Activated CD4-positive, alpha-beta T cell treated with anti-CD3 and anti-CD28 coated beads for 36 hours (primary cell): ENCODE measurements at regions of chr11 and their contacts with region 1.

Region 1: GRCh38 chr11:61639816-61640443 is 40.3 kb upstream of the DAGLA start:
- DNase-seq: peak; percentile 15
- ATAC-seq: no peak
- H3K4me3 Mint-ChIP-seq: no peak overlapping the region
- H3K27ac Mint-ChIP-seq: no peak overlapping the region
- H3K4me1 Mint-ChIP-seq: no peaks in the 10 kb centered on the region
- H3K27me3 Mint-ChIP-seq: no peaks in the 10 kb centered on the region

Region 2: GRCh38 chr11:61477727-61478148 is 162.2 kb before region 1 on chr11:
- CTCF ChIA-PET with region 1: interaction called, 22 read pairs
- POLR2A ChIA-PET with region 1: no interaction called
- intact Hi-C with region 1: loop called (anchors 1 to 5 kb)
- DNase-seq: peak; percentile 70
- ATAC-seq: peak; percentile 56
- H3K4me3 Mint-ChIP-seq: no peak overlapping the region
- H3K27ac Mint-ChIP-seq: no peak overlapping the region
- H3K4me1 Mint-ChIP-seq: peaks cover 9% of the 10 kb centered on the region
- H3K27me3 Mint-ChIP-seq: no peaks in the 10 kb centered on the region

Region 3: DNA sequence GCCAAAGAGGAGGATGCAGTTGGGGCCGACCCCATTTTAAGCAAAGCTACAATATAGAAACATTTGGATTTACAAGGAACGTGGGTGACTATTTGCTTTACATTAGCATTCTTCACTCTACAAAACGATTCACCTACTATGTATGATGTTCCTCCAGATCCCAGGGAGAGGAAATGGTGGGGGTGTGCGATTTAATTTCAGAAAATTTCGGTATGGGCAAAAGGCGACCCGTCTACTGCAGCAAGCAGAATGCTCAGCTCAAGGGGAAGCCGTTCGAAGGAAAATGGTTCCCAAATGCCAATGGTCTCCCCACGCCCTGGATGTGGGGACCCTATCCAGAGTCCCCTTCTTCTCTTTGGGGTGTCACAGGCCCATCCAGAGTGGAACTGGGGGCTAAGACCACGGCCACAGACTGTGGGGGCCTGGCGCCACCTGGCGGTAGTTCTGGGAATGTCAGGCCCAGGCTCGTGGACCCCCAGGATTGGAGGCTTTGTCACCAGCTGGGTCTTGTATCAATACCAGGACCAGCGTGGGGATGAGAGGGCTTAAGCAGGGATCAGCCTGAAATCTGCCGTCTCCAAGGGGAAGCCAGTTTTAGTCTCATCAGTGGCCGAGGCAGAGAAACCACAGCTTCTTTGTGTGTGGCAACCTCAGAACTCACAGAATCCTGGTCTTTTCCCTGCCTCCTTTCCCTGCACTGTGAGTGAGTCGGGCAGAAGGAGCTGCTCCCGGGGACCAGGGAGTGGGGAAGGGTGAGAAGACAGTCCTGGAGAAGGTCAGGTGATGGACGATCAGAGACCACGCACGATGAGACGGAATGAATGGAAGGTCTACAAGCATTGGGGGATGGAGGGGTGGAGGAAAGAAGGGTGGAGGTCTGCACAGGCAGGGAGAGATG is 123.0 kb before region 1 on chr11:
- CTCF ChIA-PET with region 1: interaction called, 11 read pairs
- POLR2A ChIA-PET with region 1: no interaction called
- intact Hi-C with region 1: no loop called
- DNase-seq: peak; percentile 72
- ATAC-seq: peak; percentile 69
- H3K4me3 Mint-ChIP-seq: peak overlapping the region; percentile 2
- H3K27ac Mint-ChIP-seq: no peak overlapping the region
- H3K4me1 Mint-ChIP-seq: peaks cover 6% of the 10 kb centered on the region
- H3K27me3 Mint-ChIP-seq: peaks cover 15% of the 10 kb centered on the region

Region 4: DNA sequence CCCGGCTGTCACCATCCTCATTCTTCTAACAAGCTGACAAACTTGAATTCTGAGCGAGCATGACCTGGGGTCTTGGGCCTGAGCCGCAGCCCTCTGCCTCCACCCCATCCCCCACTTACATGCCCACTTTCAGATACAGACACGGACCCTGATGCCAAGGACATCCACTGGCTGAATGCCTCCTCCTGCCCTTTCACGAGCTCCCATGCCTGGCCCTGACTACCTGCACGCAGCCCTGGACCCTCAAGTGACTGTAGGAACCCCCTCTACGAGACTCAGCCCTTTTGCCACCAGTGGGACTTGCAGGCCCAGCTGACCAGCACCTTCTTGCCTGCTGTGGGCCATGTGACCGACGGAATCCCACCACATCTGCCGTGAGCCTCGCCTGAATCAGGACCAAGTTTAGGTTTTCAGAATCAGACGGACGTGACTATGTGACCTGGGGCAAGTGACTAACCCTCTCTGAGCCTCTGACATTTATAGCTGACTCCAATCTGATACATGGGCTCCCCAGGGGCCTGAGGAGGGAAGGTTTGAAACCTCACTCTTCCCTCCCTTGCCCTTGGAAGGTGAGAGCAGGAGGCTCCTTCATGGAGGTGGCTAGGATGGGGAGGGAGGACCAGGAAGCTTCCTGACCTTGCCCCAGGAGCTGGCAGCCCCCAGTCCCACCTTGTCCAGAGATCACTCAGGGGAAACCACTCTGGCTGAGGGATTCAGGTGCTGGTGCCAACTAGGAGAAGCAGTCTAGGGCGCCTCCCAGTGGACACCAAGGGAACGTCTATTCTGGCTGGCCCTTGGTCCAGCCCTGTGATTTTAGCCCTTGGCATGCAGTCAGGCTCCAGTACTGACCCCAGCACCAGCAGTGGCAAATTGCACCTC is 12.1 kb before region 1 on chr11:
- CTCF ChIA-PET with region 1: interaction called, 25 read pairs
- POLR2A ChIA-PET with region 1: no interaction called
- intact Hi-C with region 1: no loop called
- DNase-seq: peak; percentile 74
- ATAC-seq: peak; percentile 84
- H3K4me3 Mint-ChIP-seq: no peak overlapping the region
- H3K27ac Mint-ChIP-seq: no peak overlapping the region
- H3K4me1 Mint-ChIP-seq: no peaks in the 10 kb centered on the region
- H3K27me3 Mint-ChIP-seq: peaks cover 5% of the 10 kb centered on the region

Region 5: GRCh38 chr11:61679893-61680621 is 40.1 kb after region 1 on chr11 and contains the start of gene DAGLA:
- CTCF ChIA-PET with region 1: no interaction called
- POLR2A ChIA-PET with region 1: no interaction called
- intact Hi-C with region 1: no loop called
- DNase-seq: peak; percentile 86
- ATAC-seq: peak; percentile 86
- H3K4me3 Mint-ChIP-seq: peak within 1 kb of the TSS; percentile 61
- H3K27ac Mint-ChIP-seq: no peak within 1 kb of the TSS
- H3K4me1 Mint-ChIP-seq: peaks cover 4% of the 10 kb centered on the region
- H3K27me3 Mint-ChIP-seq: peaks cover 18% of the 10 kb centered on the region
- total RNA-seq, gene DAGLA: 0.09 to 0.14 TPM

Region 6: GRCh38 chr11:61733120-61733978 is 93.4 kb after region 1 on chr11:
- CTCF ChIA-PET with region 1: interaction called, 10 read pairs
- POLR2A ChIA-PET with region 1: interaction called, 3 read pairs
- intact Hi-C with region 1: loop called in 1 of 2 experiments (anchors 1 kb)
- DNase-seq: peak; percentile 92
- ATAC-seq: peak; percentile 95
- H3K4me3 Mint-ChIP-seq: no peak overlapping the region
- H3K27ac Mint-ChIP-seq: no peak overlapping the region
- H3K4me1 Mint-ChIP-seq: peaks cover 2% of the 10 kb centered on the region
- H3K27me3 Mint-ChIP-seq: no peaks in the 10 kb centered on the region